ENCODE measurements at regions of chr7 and their contacts with region 1.

Region 1: DNA sequence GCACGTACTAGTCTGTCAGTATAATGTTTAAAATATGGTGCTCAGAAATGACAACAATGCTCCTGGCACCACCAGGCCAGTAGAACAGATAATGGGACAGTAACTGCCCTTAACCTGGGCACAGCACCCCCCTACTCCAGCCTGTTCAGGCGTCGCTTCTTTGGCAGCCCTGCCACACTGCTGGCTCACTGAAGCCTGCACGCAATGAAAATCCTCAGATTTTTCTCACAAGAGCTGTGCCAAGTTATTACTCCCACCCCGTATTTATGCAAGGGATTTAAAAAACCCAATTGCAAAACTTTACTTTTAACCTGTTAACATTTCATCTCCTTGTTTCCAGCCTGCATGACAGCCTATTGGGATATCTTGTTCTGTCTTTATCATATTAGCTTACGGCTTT is 56.6 kb upstream of the LAMB1 start:
- DNase-seq: no peak
- H3K4me3 ChIP-seq: no peak overlapping the region
- H3K27ac ChIP-seq: no peak overlapping the region
- H3K4me1 ChIP-seq: no peaks in the 10 kb centered on the region
- H3K27me3 ChIP-seq: no peaks in the 10 kb centered on the region
- CTCF ChIP-seq: no peak

Region 2: DNA sequence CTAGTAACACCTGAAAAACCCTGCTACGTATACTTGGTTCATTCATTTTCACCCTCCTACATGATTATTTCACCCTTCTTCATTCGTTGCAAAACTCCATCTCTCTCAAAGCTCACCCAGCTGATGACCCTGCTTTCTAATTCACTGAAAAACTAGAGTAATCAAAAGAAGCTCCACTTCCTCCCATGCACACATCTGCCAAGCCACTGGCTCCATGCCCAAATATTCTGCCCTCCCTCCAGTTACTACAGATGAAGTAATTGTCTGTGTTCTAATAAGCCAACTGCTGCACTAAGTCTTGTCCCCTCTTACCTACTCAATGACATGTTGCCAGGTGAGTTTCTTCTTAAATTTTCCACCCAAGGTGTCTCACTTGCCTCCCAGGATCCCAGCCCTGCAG is 1301.7 kb before region 1 on chr7:
- CTCF ChIA-PET with region 1: no interaction called
- POLR2A ChIA-PET with region 1: no interaction called
- intact Hi-C with region 1: no loop called
- DNase-seq: peak; percentile 67
- H3K4me3 ChIP-seq: no peak overlapping the region
- H3K27ac ChIP-seq: no peak overlapping the region
- H3K4me1 ChIP-seq: peaks cover 8% of the 10 kb centered on the region
- H3K27me3 ChIP-seq: no peaks in the 10 kb centered on the region
- CTCF ChIP-seq: no peak

Region 3: DNA sequence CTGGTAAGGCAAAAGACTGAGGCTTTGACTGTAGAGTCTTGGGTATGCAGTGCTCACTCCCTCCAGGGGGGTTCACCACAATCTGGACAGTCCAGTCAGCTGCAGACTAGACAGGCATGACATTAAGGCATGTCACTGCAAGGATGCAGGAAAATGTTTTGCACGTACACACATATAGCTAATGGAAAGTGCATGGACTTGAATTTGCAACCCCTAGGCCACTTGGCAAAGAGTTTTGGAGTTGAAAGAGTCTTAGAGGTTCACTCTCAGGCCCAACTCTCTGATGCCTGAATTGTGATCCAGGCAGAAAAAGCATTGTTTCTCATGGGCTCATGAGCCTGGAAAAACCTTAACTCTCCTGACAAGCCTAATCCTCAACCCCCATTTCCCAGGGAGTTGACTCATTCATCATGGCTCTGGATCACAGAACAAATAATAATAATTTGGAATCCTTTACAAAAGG is 18.7 kb after region 1 on chr7:
- CTCF ChIA-PET with region 1: no interaction called
- POLR2A ChIA-PET with region 1: interaction called, 12 read pairs
- intact Hi-C with region 1: no loop called
- DNase-seq: no peak
- H3K4me3 ChIP-seq: no peak overlapping the region
- H3K27ac ChIP-seq: no peak overlapping the region
- H3K4me1 ChIP-seq: peaks cover 29% of the 10 kb centered on the region
- H3K27me3 ChIP-seq: no peaks in the 10 kb centered on the region
- CTCF ChIP-seq: no peak

Region 4: DNA sequence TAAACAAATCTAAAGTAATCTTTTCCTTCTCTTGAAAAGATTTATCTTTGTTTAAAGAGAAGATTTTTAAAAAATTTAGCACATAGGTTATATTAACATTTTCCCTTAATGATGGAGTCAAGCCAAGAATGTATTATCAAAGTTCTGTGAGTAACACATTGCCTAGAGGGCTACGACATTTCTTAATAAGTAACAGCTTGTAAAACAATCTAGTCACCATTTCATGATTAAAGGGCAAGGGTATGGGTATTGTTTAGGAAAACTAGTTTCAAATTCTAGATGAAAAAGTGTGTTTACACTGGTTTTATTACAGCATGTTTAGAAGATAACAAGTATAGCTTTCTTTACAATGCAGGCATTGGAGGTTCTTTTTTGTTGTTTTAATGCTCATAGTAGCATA is 99.2 kb after region 1 on chr7:
- CTCF ChIA-PET with region 1: no interaction called
- POLR2A ChIA-PET with region 1: no interaction called
- intact Hi-C with region 1: no loop called
- DNase-seq: no peak
- H3K4me3 ChIP-seq: no peak overlapping the region
- H3K27ac ChIP-seq: no peak overlapping the region
- H3K4me1 ChIP-seq: no peaks in the 10 kb centered on the region
- H3K27me3 ChIP-seq: no peaks in the 10 kb centered on the region
- CTCF ChIP-seq: no peak

Region 5: DNA sequence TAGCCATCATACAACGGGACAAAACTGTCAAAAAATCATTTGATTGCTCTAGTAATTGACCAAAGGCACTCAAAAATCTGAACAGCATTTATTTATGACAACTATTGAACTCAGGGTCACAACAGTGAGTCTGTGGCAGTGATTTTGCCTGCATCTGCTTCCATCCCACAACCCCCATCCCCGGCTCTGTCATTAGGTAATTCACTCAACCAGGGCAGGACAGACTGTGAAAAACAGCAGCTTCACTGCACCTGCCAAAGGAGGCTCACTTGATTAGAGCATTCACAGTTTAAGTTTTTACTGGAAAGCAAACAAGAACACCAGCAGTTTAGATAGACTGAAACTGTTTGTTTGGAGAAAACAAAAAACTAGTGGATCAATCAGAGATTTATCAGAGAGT is 374.5 kb after region 1 on chr7:
- CTCF ChIA-PET with region 1: no interaction called
- POLR2A ChIA-PET with region 1: no interaction called
- intact Hi-C with region 1: no loop called
- DNase-seq: no peak
- H3K4me3 ChIP-seq: no peak overlapping the region
- H3K27ac ChIP-seq: no peak overlapping the region
- H3K4me1 ChIP-seq: no peaks in the 10 kb centered on the region
- H3K27me3 ChIP-seq: no peaks in the 10 kb centered on the region
- CTCF ChIP-seq: no peak